CD14-positive monocyte (primary cell): ENCODE measurements at regions of chr4 and their contacts with region 1.

Region 1: DNA sequence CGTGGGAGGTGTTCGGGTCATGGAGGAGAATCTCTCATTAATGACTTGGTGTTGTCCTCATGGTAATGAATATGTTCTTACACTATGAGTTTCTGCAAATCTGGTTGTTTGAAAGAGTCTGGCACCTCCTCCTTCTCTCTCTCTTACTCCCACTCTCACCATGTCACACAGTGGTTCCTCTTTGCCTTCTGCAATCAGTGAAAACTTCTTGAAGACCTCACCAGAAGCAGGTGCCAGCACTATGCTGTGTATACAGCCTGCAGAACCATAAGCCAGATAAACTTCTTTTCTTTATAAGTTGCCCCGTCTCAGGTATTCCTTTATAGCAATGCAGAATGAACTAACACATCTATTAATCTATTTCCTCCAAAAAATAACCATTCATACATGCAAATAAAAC is 275.0 kb downstream of the ANTXR2 start:
- DNase-seq: no peak
- H3K4me3 ChIP-seq: no peak overlapping the region
- H3K4me3 Mint-ChIP-seq: no peak overlapping the region
- H3K27ac ChIP-seq: no peak overlapping the region
- H3K27ac Mint-ChIP-seq: no peak overlapping the region
- H3K4me1 ChIP-seq: no peaks in the 10 kb centered on the region
- H3K4me1 Mint-ChIP-seq: no peaks in the 10 kb centered on the region
- H3K27me3 ChIP-seq: no peaks in the 10 kb centered on the region
- H3K27me3 Mint-ChIP-seq: peaks cover 0 to 1% (median 0%) of the 10 kb centered on the region in 3 donors
- CTCF ChIP-seq: no peak

Region 2: DNA sequence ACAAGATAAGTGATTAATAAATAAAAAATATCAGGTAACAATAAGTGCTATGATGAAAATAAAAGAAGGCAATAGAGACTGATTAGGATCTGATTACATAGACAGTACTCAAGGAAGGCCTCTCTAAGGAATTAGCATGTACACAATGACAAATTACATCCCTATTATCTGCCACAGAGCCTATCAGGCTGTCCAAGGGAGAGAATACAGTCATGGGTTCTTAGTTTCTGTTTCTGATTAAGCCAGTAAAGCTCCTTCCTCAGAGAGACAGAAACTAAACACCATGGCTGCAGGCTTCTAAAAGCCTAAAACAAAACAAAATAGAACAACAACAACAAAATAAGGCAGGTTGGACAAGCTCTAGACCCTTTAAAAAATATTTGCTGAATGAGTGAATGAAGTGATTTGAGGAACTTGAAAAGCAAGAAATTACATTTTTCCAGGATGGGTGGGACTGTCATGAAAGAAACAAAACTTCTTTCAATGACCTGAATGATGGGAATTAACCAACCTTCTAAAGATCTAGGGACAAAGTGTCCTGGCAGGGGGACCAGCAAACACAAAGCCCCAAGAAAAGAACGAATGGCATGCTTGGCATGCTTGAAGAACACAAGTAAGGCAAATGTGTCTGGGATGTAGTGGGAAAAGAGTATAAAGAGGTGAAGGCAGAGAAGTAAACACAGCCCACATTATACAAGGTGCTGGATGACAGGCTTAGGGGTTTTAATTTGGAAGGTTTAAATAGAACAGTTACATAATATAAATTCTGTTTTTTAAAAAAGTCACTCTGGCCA is 516.3 kb before region 1 on chr4:
- intact Hi-C with region 1: loop called in 1 of 2 experiments (anchors 10 kb)
- DNase-seq: no peak
- H3K4me3 ChIP-seq: no peak overlapping the region
- H3K4me3 Mint-ChIP-seq: no peak overlapping the region
- H3K27ac ChIP-seq: no peak overlapping the region
- H3K27ac Mint-ChIP-seq: no peak overlapping the region
- H3K4me1 ChIP-seq: no peaks in the 10 kb centered on the region
- H3K4me1 Mint-ChIP-seq: no peaks in the 10 kb centered on the region
- H3K27me3 ChIP-seq: no peaks in the 10 kb centered on the region
- H3K27me3 Mint-ChIP-seq: no peaks in the 10 kb centered on the region
- CTCF ChIP-seq: no peak